ENCODE measurements at regions of chr10 and their contacts with region 1.

Region 1: GRCh38 chr10:62594093-62594520 is 210.4 kb upstream of the ADO start:
- DNase-seq: no peak
- H3K4me3 ChIP-seq: no peak overlapping the region
- H3K27ac ChIP-seq: no peak overlapping the region
- H3K4me1 ChIP-seq: no peaks in the 10 kb centered on the region
- H3K27me3 ChIP-seq: no peaks in the 10 kb centered on the region
- CTCF ChIP-seq: peak; percentile 50 to 88 (median 80)
- POLR2A ChIP-seq: no peak

Region 2: DNA sequence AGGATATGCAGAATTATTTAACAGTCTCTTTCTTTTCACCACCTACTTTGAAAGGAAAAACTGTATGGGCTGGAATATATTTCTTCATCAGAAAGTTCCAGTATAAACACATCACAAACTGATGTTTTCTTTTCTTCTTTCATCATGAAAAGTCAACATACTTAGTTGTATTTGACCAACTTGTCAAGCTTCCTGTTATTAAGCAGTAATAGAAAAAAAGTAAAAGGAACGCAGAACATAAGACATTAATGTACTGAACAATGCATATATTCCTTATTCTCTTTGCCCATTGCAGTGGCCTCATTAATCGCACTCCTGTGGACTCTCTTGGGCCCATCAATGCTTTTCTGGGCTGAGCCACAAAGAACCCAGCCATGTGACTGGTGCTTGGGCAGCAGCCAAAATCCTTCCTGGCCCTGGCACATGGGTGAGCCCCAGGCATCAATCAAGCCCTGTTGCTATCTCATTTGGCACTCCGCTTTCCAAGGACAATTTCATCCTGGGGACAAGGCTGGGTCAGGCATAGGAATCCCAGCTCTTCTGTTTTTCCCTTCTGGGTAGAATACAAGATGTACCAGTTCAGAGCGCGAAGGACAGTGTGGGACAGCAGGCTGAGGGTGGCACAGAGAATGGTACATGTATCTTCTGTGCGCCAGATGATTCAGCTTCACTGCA is 1692.4 kb before region 1 on chr10:
- intact Hi-C with region 1: no loop called
- DNase-seq: no peak
- H3K4me3 ChIP-seq: no peak overlapping the region
- H3K27ac ChIP-seq: no peak overlapping the region
- H3K4me1 ChIP-seq: peaks cover 0 to 5% (median 0%) of the 10 kb centered on the region in 3 donors
- H3K27me3 ChIP-seq: no peaks in the 10 kb centered on the region
- CTCF ChIP-seq: no peak
- POLR2A ChIP-seq: no peak

Region 3: DNA sequence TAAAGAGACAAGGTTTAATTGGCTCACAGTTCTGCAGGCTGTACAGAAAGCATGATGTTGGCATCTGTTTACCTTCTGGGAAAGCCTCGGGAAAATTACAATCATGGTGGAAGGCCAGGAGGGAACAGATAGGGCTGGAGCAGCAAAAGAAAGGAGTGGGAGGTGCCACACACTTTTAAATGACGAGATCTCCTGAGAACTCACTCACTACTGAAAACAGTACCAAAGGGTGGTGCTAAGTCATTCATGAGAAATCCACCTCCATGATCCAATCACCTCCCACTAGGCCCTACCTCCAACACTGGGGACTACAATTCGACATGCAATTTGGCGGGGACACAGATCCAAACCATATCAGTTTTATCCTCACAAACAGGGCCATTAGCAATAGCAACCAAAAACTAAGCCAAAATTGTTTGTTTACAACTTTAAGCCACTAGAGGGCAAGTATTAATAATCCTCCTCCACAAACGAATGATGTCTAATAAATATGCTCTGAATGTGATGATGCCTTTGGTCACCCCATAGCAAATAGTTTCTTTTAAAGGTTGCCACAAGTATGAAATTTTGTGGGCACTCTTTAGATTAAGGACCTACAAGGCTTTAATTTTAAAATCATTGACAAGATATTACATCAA is 409.8 kb after region 1 on chr10:
- intact Hi-C with region 1: no loop called
- DNase-seq: no peak
- H3K4me3 ChIP-seq: no peak overlapping the region
- H3K27ac ChIP-seq: no peak overlapping the region
- H3K4me1 ChIP-seq: no peaks in the 10 kb centered on the region
- H3K27me3 ChIP-seq: no peaks in the 10 kb centered on the region
- CTCF ChIP-seq: peak in 1 of 6 experiments; percentile 26
- POLR2A ChIP-seq: no peak

Region 4: GRCh38 chr10:63157845-63158624 is 563.9 kb after region 1 on chr10:
- intact Hi-C with region 1: loop called (anchors 10 kb)
- DNase-seq: no peak
- H3K4me3 ChIP-seq: no peak overlapping the region
- H3K27ac ChIP-seq: no peak overlapping the region
- H3K4me1 ChIP-seq: peaks cover 0 to 4% (median 0%) of the 10 kb centered on the region in 3 donors
- H3K27me3 ChIP-seq: no peaks in the 10 kb centered on the region
- CTCF ChIP-seq: peak; percentile 71 to 79 (median 74)
- POLR2A ChIP-seq: no peak

Measured in esophagus squamous epithelium (tissue), 5 donors.